PC-3 (cell line): ENCODE measurements at regions of chr6 and their contacts with region 1.

Region 1: DNA sequence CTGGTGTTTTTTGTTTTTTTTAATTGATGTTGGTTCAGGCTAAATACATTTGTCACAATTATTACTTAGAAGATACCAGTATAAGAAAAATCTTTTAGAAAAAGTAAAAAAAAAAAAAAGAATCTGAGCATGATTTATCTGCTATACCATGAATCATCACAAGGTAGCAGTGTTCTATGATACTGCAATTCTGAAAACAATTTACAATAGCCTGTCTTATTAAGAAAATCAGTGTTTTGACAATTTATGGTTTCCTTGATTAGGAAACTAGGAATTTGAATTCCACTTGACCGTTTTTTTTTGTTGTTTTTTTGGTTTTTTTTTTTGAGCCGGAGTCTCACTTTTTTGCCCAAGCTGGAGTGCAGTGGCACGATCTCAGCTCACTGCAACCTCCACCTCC is 9.3 kb upstream of the MAK start:
- DNase-seq: peak; percentile 29
- ATAC-seq: no peak
- H3K4me3 ChIP-seq: no peak overlapping the region
- H3K27ac ChIP-seq: no peak overlapping the region
- H3K4me1 ChIP-seq: no peaks in the 10 kb centered on the region
- H3K27me3 ChIP-seq: no peaks in the 10 kb centered on the region
- CTCF ChIP-seq: peak; percentile 57

Region 2: DNA sequence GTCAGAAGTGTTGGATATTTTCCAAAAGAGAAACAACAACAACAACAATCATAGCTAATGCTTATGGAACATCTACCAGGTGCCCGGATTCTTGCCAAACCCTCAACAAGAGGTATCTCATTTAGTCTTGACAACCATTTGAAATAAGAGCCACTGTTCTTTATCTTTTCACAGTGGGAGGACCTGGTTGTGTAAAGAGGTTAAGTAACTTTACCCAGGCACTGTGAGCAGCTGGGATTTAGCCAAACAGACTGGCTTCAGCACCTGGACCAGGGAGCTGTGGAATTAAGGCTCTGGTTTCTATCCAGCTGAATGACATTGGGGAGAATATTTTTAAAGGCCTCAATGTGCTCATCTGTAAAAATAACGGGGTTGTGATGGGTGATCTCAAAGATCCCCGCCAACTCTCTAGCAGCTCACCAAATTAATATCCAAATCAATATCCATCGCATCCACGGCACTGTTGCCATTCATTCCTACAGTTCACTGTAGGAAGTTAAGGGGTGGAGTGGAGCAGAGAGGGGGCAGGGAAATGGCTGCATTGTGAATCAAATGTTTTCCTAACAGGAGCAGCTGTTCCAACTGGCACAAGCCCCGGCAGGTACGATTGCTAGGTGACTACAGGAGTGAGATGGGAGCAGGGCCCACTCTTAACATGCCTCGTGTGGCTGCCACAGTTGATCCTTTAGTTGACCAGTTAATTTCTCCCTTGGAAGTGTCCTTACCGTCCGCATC is 264.7 kb before region 1 on chr6:
- CTCF ChIA-PET with region 1: no interaction called
- POLR2A ChIA-PET with region 1: no interaction called
- intact Hi-C with region 1: no loop called
- DNase-seq: no peak
- ATAC-seq: no peak
- H3K4me3 ChIP-seq: no peak overlapping the region
- H3K27ac ChIP-seq: no peak overlapping the region
- H3K4me1 ChIP-seq: no peaks in the 10 kb centered on the region
- H3K27me3 ChIP-seq: no peaks in the 10 kb centered on the region
- CTCF ChIP-seq: no peak

Region 3: DNA sequence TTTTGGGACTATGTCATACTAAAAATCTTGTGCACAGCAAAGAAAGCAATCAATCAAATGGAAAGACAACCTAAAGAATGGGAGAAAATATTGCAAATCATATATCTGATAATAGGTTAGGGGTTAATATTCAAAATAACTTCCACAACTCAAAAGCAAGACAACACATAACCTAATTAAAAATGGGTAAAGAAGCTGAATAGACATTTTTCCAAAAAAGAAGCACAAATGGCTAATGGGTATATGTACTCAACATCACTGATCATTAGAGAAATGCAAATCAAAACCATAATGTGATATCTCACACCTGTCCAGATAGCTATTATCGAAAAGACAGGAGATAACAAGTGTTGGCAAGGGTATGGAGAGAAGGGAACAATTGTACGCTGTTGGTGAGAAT is 92.2 kb after region 1 on chr6:
- CTCF ChIA-PET with region 1: no interaction called
- POLR2A ChIA-PET with region 1: no interaction called
- intact Hi-C with region 1: no loop called
- DNase-seq: no peak
- ATAC-seq: no peak
- H3K4me3 ChIP-seq: no peak overlapping the region
- H3K27ac ChIP-seq: no peak overlapping the region
- H3K4me1 ChIP-seq: no peaks in the 10 kb centered on the region
- H3K27me3 ChIP-seq: peaks cover 32% of the 10 kb centered on the region
- CTCF ChIP-seq: no peak

Region 4: DNA sequence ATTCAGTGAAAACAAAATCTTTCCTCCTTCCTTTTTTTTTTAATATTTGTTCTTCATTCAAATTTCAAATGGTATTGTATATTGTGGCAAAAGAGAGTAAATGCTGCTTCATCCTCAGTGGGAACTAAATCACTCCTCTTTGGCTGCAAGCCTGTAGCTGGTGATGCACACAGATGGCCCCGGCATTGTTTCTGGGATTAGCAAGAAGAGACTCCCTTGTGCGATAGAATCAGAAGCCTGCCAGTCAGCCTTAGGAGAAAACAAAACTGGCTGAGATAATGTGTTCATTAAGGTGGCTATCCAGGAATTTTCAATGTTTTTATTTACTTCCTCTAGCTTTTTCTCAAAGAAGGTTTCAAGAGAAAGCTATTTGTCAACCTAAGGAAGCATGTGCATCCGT is 217.2 kb after region 1 on chr6:
- CTCF ChIA-PET with region 1: no interaction called
- POLR2A ChIA-PET with region 1: no interaction called
- intact Hi-C with region 1: loop called (anchors 2 kb)
- DNase-seq: no peak
- ATAC-seq: no peak
- H3K4me3 ChIP-seq: no peak overlapping the region
- H3K27ac ChIP-seq: no peak overlapping the region
- H3K4me1 ChIP-seq: no peaks in the 10 kb centered on the region
- H3K27me3 ChIP-seq: no peaks in the 10 kb centered on the region
- CTCF ChIP-seq: no peak

Region 5: GRCh38 chr6:11575408-11576033 is 727.8 kb after region 1 on chr6:
- CTCF ChIA-PET with region 1: interaction called, 11 read pairs
- POLR2A ChIA-PET with region 1: no interaction called
- intact Hi-C with region 1: no loop called
- DNase-seq: peak; percentile 85
- ATAC-seq: peak; percentile 100
- H3K4me3 ChIP-seq: peak overlapping the region; percentile 21
- H3K27ac ChIP-seq: no peak overlapping the region
- H3K4me1 ChIP-seq: 0 out of 2 replicates have a peak, but pooled peaks cover 3% of the 10 kb centered on the region
- H3K27me3 ChIP-seq: no peaks in the 10 kb centered on the region
- CTCF ChIP-seq: peak; percentile 95